ENCODE measurements at regions of chr18 and their contacts with region 1.

Region 1: DNA sequence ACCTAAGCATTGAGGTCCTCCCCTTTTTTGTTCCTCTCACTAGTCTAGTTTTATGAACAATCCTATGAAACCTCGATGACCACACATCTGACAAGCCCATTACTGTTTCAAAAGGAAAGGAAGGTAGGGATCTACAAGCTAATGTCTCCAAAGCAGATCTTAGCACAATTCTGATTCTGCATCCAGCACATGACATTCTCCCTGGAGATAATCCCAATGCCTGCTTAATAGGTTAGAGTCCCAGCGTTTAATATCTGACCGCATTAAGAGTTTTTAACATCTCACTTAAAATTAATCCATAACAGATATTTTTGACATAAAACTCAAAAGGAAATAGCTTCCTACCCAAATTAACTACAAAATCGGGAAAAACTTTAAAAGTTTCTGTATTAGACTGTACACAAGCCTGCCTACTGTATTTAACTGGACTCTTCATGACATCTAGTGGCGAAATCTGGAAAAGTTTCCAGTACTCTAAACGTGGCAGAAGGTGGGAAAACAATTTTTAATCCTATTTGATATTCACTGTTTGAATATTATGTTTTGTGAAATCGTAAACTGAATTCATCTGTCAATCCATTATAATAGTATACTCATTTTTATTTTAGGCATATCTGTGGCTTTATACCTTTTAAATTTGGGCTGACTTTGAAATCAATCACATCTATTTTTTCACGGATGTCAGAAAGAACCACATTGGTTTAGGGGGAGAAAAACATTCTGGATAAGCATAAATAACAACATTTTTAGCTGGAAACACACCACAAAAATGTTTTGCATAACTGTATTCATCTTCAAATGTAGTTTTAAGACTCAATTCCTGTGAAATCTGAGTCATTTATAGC is 62.4 kb downstream of the TXNL1 start:
- DNase-seq: peak; percentile 71
- ATAC-seq: peak; percentile 80
- H3K4me3 ChIP-seq: no peak overlapping the region
- H3K27ac ChIP-seq: no peak overlapping the region
- H3K4me1 ChIP-seq: peaks cover 10% of the 10 kb centered on the region
- H3K27me3 ChIP-seq: no peaks in the 10 kb centered on the region
- CTCF ChIP-seq: peak; percentile 77
- POLR2A ChIP-seq: peak; percentile 44; the same call in 1 of the 2 replicates
- RAD21 ChIP-seq: peak; percentile 87

Region 2: GRCh38 chr18:55096261-55096951 is 1479.6 kb before region 1 on chr18:
- CTCF ChIA-PET with region 1: no interaction called
- POLR2A ChIA-PET with region 1: no interaction called
- dilution Hi-C with region 1: no loop called
- in situ Hi-C with region 1: loop called (anchors 25 kb)
- intact Hi-C with region 1: loop called (anchors 5 kb)
- DNase-seq: peak; percentile 72
- ATAC-seq: peak; percentile 90
- H3K4me3 ChIP-seq: no peak overlapping the region
- H3K27ac ChIP-seq: no peak overlapping the region
- H3K4me1 ChIP-seq: no peaks in the 10 kb centered on the region
- H3K27me3 ChIP-seq: no peaks in the 10 kb centered on the region; the same call in 1 of the 2 replicates
- CTCF ChIP-seq: peak; percentile 50
- POLR2A ChIP-seq: no peak
- RAD21 ChIP-seq: peak; percentile 66

Region 3: DNA sequence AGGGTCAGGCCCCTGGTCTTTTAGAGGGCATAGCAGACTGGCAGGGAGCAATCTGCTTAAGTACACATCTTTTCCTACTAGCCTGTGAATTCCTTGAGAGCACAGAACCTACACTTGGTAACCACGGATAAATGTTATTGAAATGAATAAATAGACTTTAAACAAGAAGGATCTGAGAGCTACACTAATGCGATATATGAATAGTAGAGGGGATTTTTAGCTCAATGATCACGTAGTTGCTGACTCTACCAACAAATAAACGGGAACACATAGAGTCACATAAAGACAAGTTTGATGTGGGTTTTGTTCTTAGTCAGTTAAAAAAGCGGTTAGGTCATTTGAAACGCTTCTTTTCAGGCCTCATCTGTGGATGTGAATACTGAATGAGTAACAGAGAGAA is 1326.5 kb before region 1 on chr18:
- CTCF ChIA-PET with region 1: no interaction called
- POLR2A ChIA-PET with region 1: no interaction called
- dilution Hi-C with region 1: no loop called
- in situ Hi-C with region 1: loop called (anchors 5 kb)
- intact Hi-C with region 1: no loop called
- DNase-seq: no peak
- ATAC-seq: no peak
- H3K4me3 ChIP-seq: no peak overlapping the region
- H3K27ac ChIP-seq: no peak overlapping the region
- H3K4me1 ChIP-seq: peaks cover 17% of the 10 kb centered on the region
- H3K27me3 ChIP-seq: no peaks in the 10 kb centered on the region
- CTCF ChIP-seq: no peak
- POLR2A ChIP-seq: no peak
- RAD21 ChIP-seq: no peak

Region 4: GRCh38 chr18:55415258-55415871 is 1160.7 kb before region 1 on chr18:
- CTCF ChIA-PET with region 1: no interaction called
- POLR2A ChIA-PET with region 1: no interaction called
- dilution Hi-C with region 1: no loop called
- in situ Hi-C with region 1: loop called (anchors 10 kb)
- intact Hi-C with region 1: loop called (anchors 1 kb)
- DNase-seq: peak; percentile 86
- ATAC-seq: peak; percentile 92
- H3K4me3 ChIP-seq: no peak overlapping the region
- H3K27ac ChIP-seq: no peak overlapping the region
- H3K4me1 ChIP-seq: peaks cover 9% of the 10 kb centered on the region
- H3K27me3 ChIP-seq: no peaks in the 10 kb centered on the region
- CTCF ChIP-seq: peak; percentile 90
- POLR2A ChIP-seq: no peak
- RAD21 ChIP-seq: peak; percentile 94

Region 5: DNA sequence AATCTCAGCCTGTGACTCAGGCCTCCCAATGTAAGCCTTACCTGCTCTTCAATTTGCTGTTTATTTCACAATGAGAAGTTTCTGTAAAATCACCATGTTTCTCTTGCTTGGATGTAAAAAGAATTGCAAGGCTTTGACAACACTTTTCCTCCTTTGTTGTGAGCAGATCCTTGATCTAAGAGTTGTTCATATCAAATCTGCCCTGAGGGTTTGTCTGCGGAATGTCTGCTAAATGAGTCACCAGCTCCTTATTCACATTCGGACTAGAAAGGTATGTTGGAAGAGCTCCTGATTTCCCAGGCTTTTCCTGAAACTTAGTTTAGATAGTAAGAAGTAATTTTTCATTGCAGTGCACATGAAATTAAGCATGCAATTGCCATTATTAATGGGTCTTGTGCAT is 719.8 kb before region 1 on chr18:
- CTCF ChIA-PET with region 1: no interaction called
- POLR2A ChIA-PET with region 1: no interaction called
- dilution Hi-C with region 1: no loop called
- in situ Hi-C with region 1: loop called (anchors 10 kb)
- intact Hi-C with region 1: no loop called
- DNase-seq: peak; percentile 90
- ATAC-seq: peak; percentile 84
- H3K4me3 ChIP-seq: no peak overlapping the region
- H3K27ac ChIP-seq: no peak overlapping the region
- H3K4me1 ChIP-seq: no peaks in the 10 kb centered on the region
- H3K27me3 ChIP-seq: no peaks in the 10 kb centered on the region
- CTCF ChIP-seq: no peak
- POLR2A ChIP-seq: no peak
- RAD21 ChIP-seq: no peak

Region 6: DNA sequence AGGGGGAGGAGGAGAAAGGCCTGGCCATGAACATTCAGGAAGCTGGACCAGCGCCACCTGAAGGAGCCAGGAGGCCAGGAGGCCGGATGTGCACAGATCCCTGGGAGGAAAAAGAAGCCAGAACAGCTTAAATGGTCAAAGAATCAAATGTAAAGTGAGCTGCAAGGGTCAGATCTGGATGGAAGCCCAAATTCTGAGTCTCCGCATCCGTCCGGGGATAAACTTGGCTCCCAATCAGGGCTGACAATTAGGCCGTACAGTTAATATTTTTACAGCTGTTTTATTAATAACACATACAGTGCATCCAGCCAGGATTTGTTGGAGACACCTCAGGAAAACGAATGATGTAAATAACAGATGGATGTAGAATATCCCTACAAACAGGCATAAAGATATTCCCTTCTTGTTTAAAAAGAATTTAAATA is 492.9 kb before region 1 on chr18:
- CTCF ChIA-PET with region 1: no interaction called
- POLR2A ChIA-PET with region 1: no interaction called
- dilution Hi-C with region 1: no loop called
- in situ Hi-C with region 1: no loop called
- intact Hi-C with region 1: loop called (anchors 5 kb)
- DNase-seq: peak; percentile 92
- ATAC-seq: peak; percentile 78
- H3K4me3 ChIP-seq: no peak overlapping the region
- H3K27ac ChIP-seq: peak overlapping the region; percentile 63; the same call in 1 of the 2 replicates
- H3K4me1 ChIP-seq: peaks cover 11% of the 10 kb centered on the region
- H3K27me3 ChIP-seq: no peaks in the 10 kb centered on the region
- CTCF ChIP-seq: peak; percentile 31; the same call in 1 of the 2 replicates
- POLR2A ChIP-seq: no peak
- RAD21 ChIP-seq: 0 out of 2 replicates have a peak, but pooled peaks have one; percentile 14

Region 7: GRCh38 chr18:56873441-56874140 is 297.6 kb after region 1 on chr18:
- CTCF ChIA-PET with region 1: no interaction called
- POLR2A ChIA-PET with region 1: no interaction called
- dilution Hi-C with region 1: no loop called
- in situ Hi-C with region 1: no loop called
- intact Hi-C with region 1: no loop called
- DNase-seq: no peak
- ATAC-seq: no peak
- H3K4me3 ChIP-seq: no peak overlapping the region
- H3K27ac ChIP-seq: no peak overlapping the region
- H3K4me1 ChIP-seq: no peaks in the 10 kb centered on the region
- H3K27me3 ChIP-seq: no peaks in the 10 kb centered on the region
- CTCF ChIP-seq: no peak
- POLR2A ChIP-seq: no peak
- RAD21 ChIP-seq: no peak